SK-N-SH (cell line): ENCODE measurements at regions of chr3 and their contacts with region 1.

Region 1: GRCh38 chr3:63228087-63229023 is 49.8 kb upstream of the SYNPR start:
- DNase-seq: peak; percentile 33
- H3K4me3 ChIP-seq: peak overlapping the region in 1 of 2 experiments; percentile 20; a peak in 1 of 4 replicates
- H3K27ac ChIP-seq: no peak overlapping the region
- H3K4me1 ChIP-seq: no peaks in the 10 kb centered on the region
- H3K27me3 ChIP-seq: no peaks in the 10 kb centered on the region
- CTCF ChIP-seq: peak; percentile 73
- EP300 ChIP-seq: no peak
- RAD21 ChIP-seq: peak; percentile 77

Region 2: DNA sequence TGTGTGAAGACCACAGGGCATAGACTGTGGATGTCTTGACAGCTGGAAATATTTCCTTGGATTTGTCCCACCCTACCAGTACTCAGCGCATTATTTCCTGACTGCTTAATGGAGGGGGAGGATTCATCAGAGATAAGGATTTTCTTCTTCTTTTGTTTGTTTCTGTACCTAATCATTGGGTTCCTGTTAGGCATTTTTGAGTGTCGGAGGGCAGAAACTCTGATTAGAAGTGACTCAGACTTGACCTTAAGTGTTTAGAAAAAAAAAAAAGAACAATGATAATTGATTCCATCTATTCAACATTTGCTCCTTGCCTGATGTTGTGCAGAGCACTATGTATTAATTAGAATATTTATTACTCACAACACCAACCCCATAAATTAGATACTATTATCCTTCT is 28.7 kb before region 1 on chr3:
- CTCF ChIA-PET with region 1: interaction called, 16 read pairs
- POLR2A ChIA-PET with region 1: no interaction called
- DNase-seq: no peak
- H3K4me3 ChIP-seq: no peak overlapping the region
- H3K27ac ChIP-seq: no peak overlapping the region
- H3K4me1 ChIP-seq: no peaks in the 10 kb centered on the region
- H3K27me3 ChIP-seq: no peaks in the 10 kb centered on the region
- CTCF ChIP-seq: no peak
- EP300 ChIP-seq: no peak
- RAD21 ChIP-seq: no peak

Region 3: GRCh38 chr3:63240381-63240917 is 12.1 kb after region 1 on chr3:
- CTCF ChIA-PET with region 1: interaction called, 35 read pairs
- POLR2A ChIA-PET with region 1: no interaction called
- DNase-seq: no peak
- H3K4me3 ChIP-seq: no peak overlapping the region
- H3K27ac ChIP-seq: no peak overlapping the region
- H3K4me1 ChIP-seq: no peaks in the 10 kb centered on the region
- H3K27me3 ChIP-seq: no peaks in the 10 kb centered on the region
- CTCF ChIP-seq: no peak
- EP300 ChIP-seq: no peak
- RAD21 ChIP-seq: no peak